ENCODE measurements at regions of chr6 and their contacts with region 1.

Region 1: DNA sequence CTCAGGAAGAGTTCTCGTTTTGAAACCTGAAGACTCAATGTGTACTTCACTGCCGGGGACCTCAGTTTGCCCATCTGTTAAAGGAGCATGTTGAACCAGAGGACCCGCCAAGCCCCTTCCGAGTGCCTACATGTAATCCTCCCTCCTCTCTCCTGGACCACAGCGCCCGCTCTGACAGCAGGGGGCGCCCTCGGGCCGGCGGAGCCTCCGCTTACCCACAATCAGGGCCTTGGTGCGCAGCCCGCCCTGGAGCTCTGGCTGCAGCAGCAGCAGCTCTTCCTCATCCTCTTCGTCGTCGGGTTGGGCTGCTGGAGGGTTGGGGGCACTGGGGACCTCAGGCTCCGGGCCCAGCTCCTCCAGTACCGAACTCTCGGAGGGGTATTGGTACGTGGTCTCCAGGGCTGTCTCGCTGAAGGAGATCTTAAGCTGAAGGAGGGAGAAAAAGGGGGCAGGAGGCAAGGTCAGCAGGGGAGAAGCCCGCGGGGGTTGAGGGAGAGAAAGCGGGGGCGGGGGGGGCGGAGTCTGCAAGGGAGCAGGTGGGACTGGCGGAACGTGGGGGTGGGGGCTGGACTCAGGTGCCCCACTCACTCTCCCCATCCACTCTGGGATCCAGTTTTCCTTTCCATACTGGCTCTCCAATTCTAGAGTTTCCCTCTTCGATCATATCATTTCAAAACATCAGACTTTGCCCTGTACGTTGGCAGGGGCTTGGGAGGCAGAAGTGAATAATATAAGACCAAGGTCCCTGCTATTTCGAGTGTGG is 6.3 kb upstream of the DHX16 start:
- DNase-seq: peak; percentile 73
- ATAC-seq: peak; percentile 36
- H3K4me3 ChIP-seq: no peak overlapping the region
- H3K27ac ChIP-seq: peak overlapping the region; percentile 49
- H3K4me1 ChIP-seq: peaks cover 14% of the 10 kb centered on the region
- H3K27me3 ChIP-seq: no peaks in the 10 kb centered on the region
- CTCF ChIP-seq: peak; percentile 93
- POLR2A ChIP-seq: no peak; the same call in 1 of the 2 replicates
- RAD21 ChIP-seq: peak; percentile 95

Region 2: DNA sequence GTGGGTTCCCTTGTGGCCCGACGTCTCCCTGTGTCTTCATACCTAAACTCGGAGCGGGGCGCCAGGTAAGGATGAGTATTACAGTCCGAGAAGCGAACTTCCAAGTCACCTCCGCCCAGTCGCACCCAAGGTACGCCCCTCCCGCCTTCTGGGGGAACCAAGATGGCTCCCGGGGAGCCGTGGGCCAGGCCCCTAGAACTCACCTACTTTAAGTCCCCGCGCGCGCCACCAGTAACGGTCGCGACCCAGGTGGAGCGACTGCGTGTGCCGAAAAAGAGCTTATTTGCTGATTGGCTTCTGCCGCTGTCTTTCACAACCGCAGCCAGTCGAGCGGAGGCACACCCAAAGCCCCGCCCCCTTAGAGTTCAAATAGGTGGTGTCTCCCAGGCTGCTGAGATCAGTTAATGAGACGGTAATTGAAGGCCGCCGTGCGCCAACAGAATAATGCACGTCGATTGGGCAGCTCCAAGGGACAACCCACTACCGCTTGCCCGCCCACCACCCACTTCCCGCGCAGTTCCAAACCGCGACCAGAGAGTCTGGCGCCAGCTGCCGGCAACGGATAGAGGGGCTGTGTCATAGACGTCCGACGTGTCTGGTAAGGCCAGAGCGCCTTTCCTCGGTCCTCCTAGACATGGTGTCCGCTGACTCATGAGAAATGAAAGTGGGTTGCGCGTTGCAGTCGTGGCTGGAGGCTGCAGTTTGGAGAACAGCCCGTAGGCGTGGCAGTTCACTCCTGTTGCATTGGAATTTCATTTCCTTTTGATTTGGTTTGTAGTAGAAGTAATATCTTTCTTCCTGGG is 38.1 kb after region 1 on chr6 and contains the start of gene MDC1:
- CTCF ChIA-PET with region 1: interaction called, 12 read pairs
- POLR2A ChIA-PET with region 1: interaction called, 7 read pairs
- dilution Hi-C with region 1: no loop called
- in situ Hi-C with region 1: loop called (anchors 5 kb)
- intact Hi-C with region 1: loop called (anchors 1 kb)
- DNase-seq: peak; percentile 100
- ATAC-seq: peak; percentile 77
- H3K4me3 ChIP-seq: peak within 1 kb of the TSS; percentile 61
- H3K27ac ChIP-seq: peak within 1 kb of the TSS; percentile 78
- H3K4me1 ChIP-seq: peaks cover 4% of the 10 kb centered on the region; the same call in 1 of the 2 replicates
- H3K27me3 ChIP-seq: no peaks in the 10 kb centered on the region
- CTCF ChIP-seq: peak; percentile 29; the same call in 1 of the 2 replicates
- POLR2A ChIP-seq: peak; percentile 64
- RAD21 ChIP-seq: no peak
- total RNA-seq, gene MDC1: 3.6 and 4.5 TPM in 2 replicates

Region 3: DNA sequence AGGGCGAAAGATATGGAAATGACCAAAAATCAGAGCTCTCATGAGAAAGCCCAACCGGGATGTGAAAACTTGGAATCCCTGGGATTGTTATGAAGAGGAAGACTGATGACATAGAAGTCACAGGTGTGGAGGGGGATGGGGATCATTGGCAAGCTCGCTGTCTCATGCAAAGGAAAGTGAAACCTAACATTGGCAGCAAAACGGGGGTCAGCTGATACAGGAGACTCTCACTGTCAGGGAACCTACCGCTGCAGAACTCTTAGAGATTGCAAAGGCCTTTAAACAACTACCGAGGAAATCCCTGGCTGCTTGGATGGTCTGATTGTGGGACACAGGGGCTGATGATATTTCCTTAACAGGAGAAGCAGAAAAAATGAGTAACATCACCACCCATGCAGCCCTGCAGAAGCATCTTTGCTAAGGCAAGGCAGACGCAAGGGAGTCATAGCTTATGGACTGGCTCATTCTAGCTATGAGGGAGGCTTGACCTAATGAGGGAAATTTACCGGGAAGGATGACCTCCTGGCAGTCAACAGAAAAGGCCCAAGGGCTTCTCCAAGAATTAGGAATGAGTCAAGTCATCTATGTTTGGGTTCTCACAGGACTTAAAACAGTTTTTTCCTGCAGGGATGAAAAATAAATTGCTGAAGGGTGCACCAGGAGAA is 311.4 kb after region 1 on chr6:
- CTCF ChIA-PET with region 1: no interaction called
- POLR2A ChIA-PET with region 1: no interaction called
- dilution Hi-C with region 1: no loop called
- in situ Hi-C with region 1: no loop called
- intact Hi-C with region 1: no loop called
- DNase-seq: no peak
- ATAC-seq: no peak
- H3K4me3 ChIP-seq: no peak overlapping the region
- H3K27ac ChIP-seq: no peak overlapping the region
- H3K4me1 ChIP-seq: no peaks in the 10 kb centered on the region
- H3K27me3 ChIP-seq: peaks cover 12% of the 10 kb centered on the region
- CTCF ChIP-seq: no peak
- POLR2A ChIP-seq: no peak
- RAD21 ChIP-seq: no peak